CD4-positive, alpha-beta memory T cell (primary cell): ENCODE measurements at regions of chr16 and their contacts with region 1.

Region 1: GRCh38 chr16:29012913-29013553 is 28.2 kb downstream of the LAT start:
- DNase-seq: peak; percentile 53 to 69 (median 62)
- H3K4me3 ChIP-seq: no peak overlapping the region
- H3K4me3 Mint-ChIP-seq: peak overlapping the region; percentile 13 to 77 (median 52)
- H3K27ac ChIP-seq: no peak overlapping the region
- H3K27ac Mint-ChIP-seq: peak overlapping the region; percentile 85 to 98 (median 95)
- H3K4me1 ChIP-seq: peaks cover 62% of the 10 kb centered on the region
- H3K4me1 Mint-ChIP-seq: peaks cover 31 to 59% (median 45%) of the 10 kb centered on the region in 4 donors
- H3K27me3 ChIP-seq: no peaks in the 10 kb centered on the region
- H3K27me3 Mint-ChIP-seq: no peaks in the 10 kb centered on the region

Region 2: DNA sequence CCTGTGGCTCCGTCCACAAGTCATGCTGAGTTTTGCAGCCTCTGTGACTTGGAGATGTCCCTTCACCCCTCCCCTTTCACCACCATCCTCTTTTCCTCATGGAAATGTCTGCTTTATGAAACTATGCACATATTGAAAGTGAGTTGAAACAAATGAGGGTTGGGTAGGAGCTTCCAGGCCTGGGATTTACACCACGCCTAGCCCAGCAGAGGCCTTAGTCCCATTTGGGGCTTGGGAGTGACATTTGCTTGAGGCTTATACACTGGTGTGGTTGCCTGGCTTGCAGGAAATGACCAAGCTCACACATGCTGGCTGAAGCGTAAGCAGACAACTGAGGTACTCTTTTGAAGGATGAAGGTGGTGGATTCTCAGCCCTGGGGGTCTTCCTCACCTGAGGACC is 49.0 kb before region 1 on chr16:
- CTCF ChIA-PET with region 1: no interaction called
- POLR2A ChIA-PET with region 1: no interaction called
- intact Hi-C with region 1: no loop called
- DNase-seq: no peak
- H3K4me3 ChIP-seq: no peak overlapping the region
- H3K4me3 Mint-ChIP-seq: no peak overlapping the region
- H3K27ac ChIP-seq: no peak overlapping the region
- H3K27ac Mint-ChIP-seq: no peak overlapping the region
- H3K4me1 ChIP-seq: no peaks in the 10 kb centered on the region
- H3K4me1 Mint-ChIP-seq: peaks cover 0 to 5% (median under 1%) of the 10 kb centered on the region in 4 donors
- H3K27me3 ChIP-seq: no peaks in the 10 kb centered on the region
- H3K27me3 Mint-ChIP-seq: no peaks in the 10 kb centered on the region

Region 3: DNA sequence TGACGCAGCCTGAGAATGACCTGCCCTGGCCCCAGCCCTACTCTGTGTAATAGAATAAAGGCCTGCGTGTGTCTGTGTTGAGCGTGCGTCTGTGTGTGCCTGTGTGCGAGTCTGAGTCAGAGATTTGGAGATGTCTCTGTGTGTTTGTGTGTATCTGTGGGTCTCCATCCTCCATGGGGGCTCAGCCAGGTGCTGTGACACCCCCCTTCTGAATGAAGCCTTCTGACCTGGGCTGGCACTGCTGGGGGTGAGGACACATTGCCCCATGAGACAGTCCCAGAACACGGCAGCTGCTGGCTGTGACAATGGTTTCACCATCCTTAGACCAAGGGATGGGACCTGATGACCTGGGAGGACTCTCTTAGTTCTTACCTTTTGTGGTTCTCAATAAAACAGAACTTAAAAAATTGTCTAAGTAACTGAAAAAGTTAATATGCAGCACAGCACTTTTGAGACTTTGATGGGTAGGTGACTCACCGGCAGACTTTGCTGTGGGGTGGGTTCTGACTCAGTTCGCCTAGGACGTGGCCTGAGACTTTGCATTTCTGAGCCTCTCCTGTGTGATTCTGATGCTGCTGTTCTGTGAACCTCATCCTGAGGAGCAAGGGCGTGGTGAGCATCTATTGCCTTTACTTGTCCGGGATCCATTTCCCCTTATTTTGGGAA is 22.5 kb before region 1 on chr16:
- CTCF ChIA-PET with region 1: interaction called, 18 read pairs
- POLR2A ChIA-PET with region 1: interaction called, 92 read pairs
- intact Hi-C with region 1: loop called (anchors 2 kb)
- DNase-seq: peak in 1 of 5 donors; percentile 73
- H3K4me3 ChIP-seq: no peak overlapping the region
- H3K4me3 Mint-ChIP-seq: peak overlapping the region; percentile 62 to 99 (median 80)
- H3K27ac ChIP-seq: peak overlapping the region; percentile 33
- H3K27ac Mint-ChIP-seq: peak overlapping the region; percentile 80 to 98 (median 93)
- H3K4me1 ChIP-seq: peaks cover 47% of the 10 kb centered on the region
- H3K4me1 Mint-ChIP-seq: peaks cover 33 to 58% (median 45%) of the 10 kb centered on the region in 4 donors
- H3K27me3 ChIP-seq: no peaks in the 10 kb centered on the region
- H3K27me3 Mint-ChIP-seq: no peaks in the 10 kb centered on the region

Region 4: GRCh38 chr16:29029168-29029994 is 16.3 kb after region 1 on chr16:
- CTCF ChIA-PET with region 1: no interaction called
- POLR2A ChIA-PET with region 1: interaction called, 7 read pairs
- intact Hi-C with region 1: loop called (anchors 1 kb)
- DNase-seq: peak in 1 of 5 donors; percentile 73
- H3K4me3 ChIP-seq: no peak overlapping the region
- H3K4me3 Mint-ChIP-seq: peak overlapping the region in 6 of 8 donors; percentile 7 to 52 (median 36)
- H3K27ac ChIP-seq: no peak overlapping the region
- H3K27ac Mint-ChIP-seq: peak overlapping the region in 6 of 7 donors; percentile 55 to 83 (median 64)
- H3K4me1 ChIP-seq: peaks cover 31% of the 10 kb centered on the region
- H3K4me1 Mint-ChIP-seq: peaks cover 17 to 37% (median 26%) of the 10 kb centered on the region in 4 donors
- H3K27me3 ChIP-seq: no peaks in the 10 kb centered on the region
- H3K27me3 Mint-ChIP-seq: no peaks in the 10 kb centered on the region